Left cardiac atrium (tissue), 4 donors: ENCODE measurements at regions of chr3 and their contacts with region 1.

Region 1: DNA sequence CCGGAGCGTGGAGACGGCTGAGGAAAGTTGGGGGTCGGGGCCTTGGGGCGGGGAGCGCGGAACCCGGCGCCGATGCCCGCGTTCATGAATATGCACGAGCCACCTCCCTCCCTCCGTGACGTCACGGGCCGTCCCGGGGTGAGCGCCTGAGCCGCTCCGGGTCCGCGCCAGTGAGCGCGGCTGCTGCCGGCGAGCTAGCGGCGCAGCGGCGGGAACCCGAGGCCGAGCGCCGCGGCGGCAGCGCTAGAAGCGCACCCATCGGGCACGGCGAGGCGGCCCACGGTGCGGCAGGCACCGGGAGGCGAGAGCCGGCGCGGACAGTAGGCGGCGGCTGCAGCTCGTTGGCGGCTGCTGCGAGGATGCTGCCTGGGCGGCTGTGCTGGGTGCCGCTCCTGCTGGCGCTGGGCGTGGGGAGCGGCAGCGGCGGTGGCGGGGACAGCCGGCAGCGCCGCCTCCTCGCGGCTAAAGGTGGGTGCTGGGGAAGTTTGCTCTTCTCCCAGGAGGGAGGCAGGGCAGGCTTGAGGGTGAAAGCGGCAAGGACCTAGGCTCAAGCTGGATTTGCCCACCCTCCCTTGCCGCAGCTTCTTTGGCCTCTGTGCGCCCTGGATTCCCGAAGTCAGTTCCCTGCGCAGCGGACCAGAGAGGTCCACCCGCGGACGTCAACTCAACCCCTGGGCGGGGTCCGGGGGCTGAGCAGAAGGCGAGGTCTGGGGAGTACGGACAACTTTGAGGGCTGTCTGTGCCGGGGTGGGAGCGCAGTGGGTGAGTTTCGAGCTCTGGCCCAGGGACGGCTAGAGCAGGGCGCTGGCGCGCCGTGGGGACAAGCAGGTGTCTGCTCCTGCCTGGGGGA is at the start of gene CLSTN2:
- DNase-seq: peak; percentile 87
- ATAC-seq: peak; percentile 89 to 91
- total RNA-seq, gene CLSTN2: 22.9 to 26.6 TPM

Region 2: DNA sequence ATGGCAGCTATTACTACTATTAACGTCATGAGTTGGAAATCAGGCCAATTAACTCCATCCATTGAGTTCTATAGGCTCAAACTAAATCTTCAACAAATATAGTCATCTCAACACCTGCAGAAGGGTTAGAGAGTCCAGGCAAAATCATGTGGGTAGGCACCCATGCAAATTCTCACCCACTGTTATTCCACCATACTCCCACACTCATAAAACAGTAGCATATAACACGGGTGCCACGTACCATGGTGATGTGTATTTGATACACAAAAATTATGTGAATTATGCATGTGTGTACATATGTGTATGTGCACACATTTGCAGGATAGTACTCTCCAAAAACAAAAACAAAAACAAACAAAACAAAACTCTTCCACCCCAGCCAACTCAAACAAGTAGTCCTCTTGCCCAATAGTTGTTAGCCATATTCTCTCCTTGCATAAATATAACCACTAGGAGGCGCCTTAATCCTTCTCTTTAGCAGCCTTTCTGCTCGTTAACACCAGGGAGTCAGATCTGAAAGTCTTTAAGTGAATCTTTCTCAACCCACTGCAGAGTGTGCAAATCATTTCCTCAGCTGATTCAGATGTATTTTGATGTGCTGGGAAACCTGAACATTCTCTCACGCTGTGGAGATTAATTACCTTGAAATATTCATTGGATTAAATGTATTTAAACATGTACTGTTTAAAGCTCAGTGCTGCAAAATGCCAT is 507.8 kb before region 1 on chr3:
- intact Hi-C with region 1: loop called in 1 of 2 experiments (anchors 10 kb)
- DNase-seq: no peak
- ATAC-seq: peak; percentile 76 to 87

Region 3: DNA sequence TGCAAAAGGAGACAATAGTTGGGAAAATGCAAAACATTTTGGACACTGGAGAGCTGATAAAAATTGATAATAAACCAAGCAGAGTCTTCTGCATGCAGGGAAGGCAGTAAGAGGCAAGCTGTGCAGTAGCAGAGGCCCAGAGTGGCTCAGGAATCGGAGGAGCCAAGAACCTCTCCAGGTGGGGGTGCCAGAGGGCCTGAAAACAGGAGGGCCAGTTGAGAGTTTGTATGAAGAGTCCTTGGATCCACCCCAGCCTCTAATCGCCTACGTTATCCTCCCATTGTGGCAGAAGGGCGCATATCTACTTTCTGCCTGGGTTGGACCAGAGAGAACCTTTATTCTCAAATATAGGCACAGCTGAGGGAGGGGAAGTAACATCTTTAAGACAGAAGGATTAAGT is 346.8 kb before region 1 on chr3:
- intact Hi-C with region 1: loop called (anchors 5 to 10 kb)
- DNase-seq: peak; percentile 34
- ATAC-seq: peak; percentile 57

Region 4: DNA sequence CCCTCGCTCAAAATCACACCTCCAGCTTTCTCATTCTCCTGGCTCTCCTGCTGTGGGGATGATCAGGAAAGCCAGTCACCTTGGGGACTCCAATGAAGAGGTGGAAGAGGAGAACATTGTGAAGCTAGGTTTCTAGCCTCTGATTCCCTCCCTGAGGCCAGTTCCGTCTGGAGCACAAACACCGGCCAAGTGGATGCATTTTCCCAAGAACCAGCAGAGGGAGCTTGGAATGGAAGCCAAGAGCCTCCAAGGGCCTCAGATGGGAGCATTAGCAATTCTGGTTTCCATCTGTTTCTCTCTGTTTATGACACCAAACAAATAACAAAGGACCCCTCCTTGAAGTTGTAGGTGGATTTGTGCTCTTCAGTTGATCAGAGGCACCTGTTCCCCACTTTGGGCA is 216.8 kb before region 1 on chr3:
- intact Hi-C with region 1: loop called in 1 of 2 experiments (anchors 10 kb)
- DNase-seq: peak; percentile 37
- ATAC-seq: peak; percentile 76 to 83

Region 5: GRCh38 chr3:140051019-140051957 is 116.0 kb after region 1 on chr3:
- intact Hi-C with region 1: loop called in 1 of 2 experiments (anchors 1 kb)
- DNase-seq: no peak
- ATAC-seq: peak in 1 of 2 donors; percentile 50

Region 6: GRCh38 chr3:140206196-140207048 is 271.2 kb after region 1 on chr3:
- intact Hi-C with region 1: loop called in 1 of 2 experiments (anchors 5 kb)
- DNase-seq: no peak
- ATAC-seq: peak; percentile 72 to 83

Region 7: GRCh38 chr3:140736863-140737460 is 801.7 kb after region 1 on chr3:
- intact Hi-C with region 1: loop called in 1 of 2 experiments (anchors 5 kb)
- DNase-seq: peak; percentile 57
- ATAC-seq: peak; percentile 78 to 89